Panc1 (cell line): ENCODE measurements at regions of chr6 and their contacts with region 1.

Region 1: DNA sequence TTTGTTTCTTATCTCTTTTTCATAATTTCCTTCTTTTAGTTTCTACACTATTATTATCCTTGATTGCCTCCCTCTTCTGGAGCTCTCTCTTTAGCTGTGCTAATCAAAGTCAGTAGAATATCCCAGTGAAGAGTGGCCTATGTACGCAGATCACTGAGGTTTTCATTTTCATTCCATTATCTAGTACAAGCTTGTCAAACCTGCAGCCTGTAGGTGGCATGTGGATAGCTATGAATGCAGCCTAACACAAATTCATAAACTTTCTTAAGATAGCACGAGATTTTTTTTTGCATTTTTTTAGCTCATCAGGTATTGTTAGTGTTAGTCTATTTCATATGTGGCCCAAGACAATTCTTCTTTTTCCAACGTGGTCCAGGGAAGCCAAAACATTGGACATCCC is 825.7 kb upstream of the MAP3K7 start:
- DNase-seq: no peak
- ATAC-seq: no peak
- H3K4me3 ChIP-seq: no peak overlapping the region
- H3K27ac ChIP-seq: no peak overlapping the region
- H3K4me1 ChIP-seq: no peaks in the 10 kb centered on the region
- H3K27me3 ChIP-seq: no peaks in the 10 kb centered on the region
- CTCF ChIP-seq: no peak

Region 2: DNA sequence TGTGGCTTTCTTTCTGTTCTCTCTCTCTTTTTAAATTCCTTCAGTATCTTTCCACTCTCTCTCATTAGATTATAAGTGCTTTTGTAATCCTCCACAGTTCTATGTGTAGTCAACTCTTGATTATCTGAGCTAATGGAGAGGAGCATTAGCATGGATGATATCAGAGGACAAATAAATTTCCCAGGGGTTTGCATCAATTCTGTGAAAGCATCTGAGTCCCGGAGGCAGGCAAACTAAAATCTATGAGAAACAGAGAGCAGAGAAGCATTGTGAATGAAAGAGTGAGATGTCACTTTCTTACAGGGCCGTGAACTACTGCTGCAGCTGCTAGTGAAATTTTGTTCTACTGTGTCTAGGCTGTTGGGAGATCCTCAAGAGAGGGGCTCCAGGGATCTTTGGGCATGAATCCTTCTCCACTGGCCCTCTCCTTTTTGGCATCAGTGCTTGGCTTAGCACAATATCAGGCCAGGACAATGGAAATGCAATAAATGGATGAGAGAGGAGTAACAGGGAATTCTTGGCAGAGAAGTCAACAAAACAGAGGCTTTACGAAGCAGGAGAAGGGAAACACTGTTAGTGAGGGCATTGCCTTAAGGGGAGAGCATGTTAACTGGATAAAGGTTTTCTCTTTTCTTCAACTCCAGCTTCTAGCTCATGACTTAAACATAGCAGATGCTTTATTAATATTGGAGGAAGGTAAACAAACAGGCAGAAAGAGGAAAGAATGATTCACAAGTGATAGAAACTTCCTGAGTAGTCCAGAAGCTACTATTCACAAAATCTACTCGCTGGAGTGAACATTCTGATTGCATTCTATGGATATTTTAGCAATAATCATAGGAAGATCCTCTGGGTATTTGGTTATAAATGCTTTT is 21.4 kb after region 1 on chr6:
- CTCF ChIA-PET with region 1: no interaction called
- POLR2A ChIA-PET with region 1: interaction called, 11 read pairs
- in situ Hi-C with region 1: no loop called
- intact Hi-C with region 1: no loop called
- DNase-seq: no peak
- ATAC-seq: no peak
- H3K4me3 ChIP-seq: no peak overlapping the region
- H3K27ac ChIP-seq: no peak overlapping the region
- H3K4me1 ChIP-seq: no peaks in the 10 kb centered on the region
- H3K27me3 ChIP-seq: no peaks in the 10 kb centered on the region
- CTCF ChIP-seq: no peak

Region 3: DNA sequence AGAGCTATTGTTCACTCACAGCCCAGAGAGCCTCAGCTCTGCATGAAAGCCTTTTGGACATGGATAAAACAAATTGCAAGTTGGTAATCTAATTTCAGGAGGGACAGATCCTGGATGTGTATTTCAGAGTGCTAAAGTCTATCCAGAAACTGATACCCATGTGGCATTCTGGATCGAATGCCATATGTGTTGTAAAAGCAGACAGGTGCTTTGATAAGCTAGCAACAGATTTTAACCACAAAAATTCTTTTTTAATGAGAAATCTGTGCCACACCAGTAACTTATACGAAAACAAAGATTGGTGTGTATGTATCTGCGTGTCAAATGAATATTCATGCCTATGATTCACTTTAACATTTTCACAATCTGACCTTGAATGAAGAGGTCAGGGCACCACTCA is 111.0 kb after region 1 on chr6:
- CTCF ChIA-PET with region 1: no interaction called
- POLR2A ChIA-PET with region 1: no interaction called
- in situ Hi-C with region 1: no loop called
- intact Hi-C with region 1: no loop called
- DNase-seq: no peak
- ATAC-seq: no peak
- H3K4me3 ChIP-seq: no peak overlapping the region
- H3K27ac ChIP-seq: no peak overlapping the region
- H3K4me1 ChIP-seq: no peaks in the 10 kb centered on the region
- H3K27me3 ChIP-seq: no peaks in the 10 kb centered on the region
- CTCF ChIP-seq: no peak